ENCODE measurements at regions of chr14 and their contacts with region 1.

Region 1: DNA sequence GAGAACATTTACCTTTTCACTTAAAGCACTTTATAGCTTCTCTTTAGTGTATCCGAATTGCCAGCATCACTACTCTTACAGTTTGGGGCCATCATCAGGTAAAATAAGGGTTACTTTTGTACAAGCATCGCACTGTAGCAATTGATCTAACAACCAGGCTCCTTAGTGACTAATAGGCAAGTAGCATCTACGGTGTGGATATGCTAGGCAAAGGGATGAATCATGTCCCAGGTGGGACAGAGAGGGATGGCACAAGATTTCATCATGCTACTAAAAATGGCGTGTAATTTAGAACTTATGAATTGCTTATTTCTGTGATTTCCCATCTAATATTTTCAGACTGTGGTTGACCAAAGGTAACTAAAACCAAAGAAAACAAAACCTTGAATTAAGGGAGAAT is 582.3 kb downstream of the KCNH5 start:
- DNase-seq: no peak
- H3K4me3 ChIP-seq: no peak overlapping the region
- H3K27ac ChIP-seq: no peak overlapping the region
- H3K4me1 ChIP-seq: no peaks in the 10 kb centered on the region
- H3K27me3 ChIP-seq: no peaks in the 10 kb centered on the region
- CTCF ChIP-seq: no peak
- EP300 ChIP-seq: no peak
- POLR2A ChIP-seq: no peak

Region 2: GRCh38 chr14:63972323-63972932 is 1509.4 kb after region 1 on chr14:
- in situ Hi-C with region 1: no loop called
- intact Hi-C with region 1: loop called (anchors 5 kb)
- DNase-seq: no peak
- H3K4me3 ChIP-seq: no peak overlapping the region
- H3K27ac ChIP-seq: no peak overlapping the region
- H3K4me1 ChIP-seq: no peaks in the 10 kb centered on the region
- H3K27me3 ChIP-seq: no peaks in the 10 kb centered on the region
- CTCF ChIP-seq: no peak
- EP300 ChIP-seq: no peak
- POLR2A ChIP-seq: no peak

Measured in transverse colon (tissue), 4 donors.